ENCODE measurements at regions of chr19 and their contacts with region 1.

Region 1: DNA sequence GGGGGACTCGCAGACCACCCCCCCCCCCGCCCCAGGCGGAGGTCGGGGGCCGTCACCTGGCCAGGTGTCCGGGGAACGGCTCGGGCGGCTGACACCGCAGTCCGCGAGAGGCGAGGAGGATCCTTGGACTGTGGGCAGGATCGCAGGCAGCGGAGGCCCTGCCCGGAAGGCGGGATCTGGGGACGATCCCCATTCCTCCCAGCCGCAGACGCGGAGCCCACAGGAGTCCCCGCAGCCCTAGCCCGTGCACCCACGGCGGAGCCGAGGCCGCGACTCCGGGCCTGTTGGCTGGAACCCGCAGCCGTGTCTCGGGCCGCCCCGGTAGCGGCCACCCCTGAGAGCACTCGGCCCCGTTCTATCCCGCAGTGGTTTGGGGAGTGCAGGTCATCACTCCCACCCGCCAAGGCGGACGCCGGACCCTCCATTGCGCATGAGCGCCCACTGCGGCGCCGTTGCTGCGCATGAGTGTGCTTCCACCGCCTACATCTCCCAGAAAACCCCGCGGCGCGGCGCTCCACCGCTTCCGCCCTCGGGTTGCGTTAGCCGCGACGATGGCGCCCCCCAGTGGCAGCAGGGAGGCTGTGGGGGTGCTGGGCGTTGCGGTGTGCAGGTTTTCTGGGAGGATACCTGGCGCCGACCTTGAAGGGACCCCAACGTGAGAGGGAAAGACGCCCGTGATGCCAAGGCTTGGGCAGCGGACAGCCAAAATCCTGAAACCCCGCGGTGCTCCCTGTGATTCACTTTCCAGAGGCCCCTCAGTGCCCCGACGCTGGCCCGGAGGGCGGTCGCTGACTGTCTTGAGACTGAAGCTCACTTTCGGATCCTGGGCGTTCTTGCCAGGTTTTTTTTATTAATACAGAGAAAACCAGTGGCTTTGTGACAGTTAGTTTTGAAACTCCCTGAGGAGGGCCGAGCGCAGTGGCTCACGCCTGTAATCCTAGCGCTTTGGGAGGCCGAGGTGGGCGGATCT is 4.4 kb upstream of the ZNF329 start:
- DNase-seq: peak; percentile 91 to 99
- H3K4me3 ChIP-seq: peak overlapping the region; percentile 78
- CTCF ChIP-seq: peak in 2 of 3 donors; percentile 77 to 97
- POLR2A ChIP-seq: no peak

Region 2: GRCh38 chr19:57406516-57407123 is 748.3 kb before region 1 on chr19:
- intact Hi-C with region 1: loop called (anchors 10 kb)
- DNase-seq: peak in 1 of 2 donors; percentile 29
- H3K4me3 ChIP-seq: no peak overlapping the region
- CTCF ChIP-seq: no peak
- POLR2A ChIP-seq: no peak